CD4-positive, alpha-beta T cell (primary cell): ENCODE measurements at regions of chr14 and their contacts with region 1.

Region 1: DNA sequence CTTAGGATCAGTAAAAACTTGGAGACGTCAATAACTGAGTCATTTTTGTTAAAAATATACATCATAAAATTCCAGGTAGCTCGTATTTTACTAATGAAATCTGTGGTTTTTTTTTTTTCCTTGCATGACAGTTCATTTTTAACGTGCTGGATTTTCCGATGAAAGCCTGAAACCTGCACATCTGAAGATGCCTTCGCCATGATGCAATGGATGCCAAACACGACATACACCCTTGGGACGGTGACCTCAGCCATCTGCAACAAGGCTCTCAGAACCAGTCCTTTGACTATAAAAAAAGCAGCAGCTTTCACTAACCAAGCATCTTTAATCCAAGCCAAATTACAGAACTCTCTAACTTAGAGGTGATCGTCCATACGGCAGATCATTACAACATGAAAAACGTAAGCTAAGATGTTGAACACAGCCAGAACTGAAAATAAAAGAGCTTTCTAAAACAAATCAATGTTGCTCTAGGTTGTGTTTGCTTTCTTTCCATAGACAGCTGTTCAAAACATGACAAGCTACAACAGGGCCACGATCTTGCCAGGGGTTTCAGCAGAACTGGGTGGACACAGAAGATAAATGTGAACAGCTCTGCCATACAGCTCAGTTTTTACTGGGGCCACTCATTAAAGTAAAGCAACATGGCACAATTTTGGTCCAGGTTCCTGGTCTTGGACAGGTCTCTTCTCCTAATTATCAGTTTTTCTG is 7.8 kb downstream of the NIN start:
- DNase-seq: peak in 1 of 14 experiments; percentile 23
- ATAC-seq: peak; percentile 8
- H3K4me3 ChIP-seq: peak overlapping the region; percentile 11
- H3K4me3 Mint-ChIP-seq: peak overlapping the region; percentile 73
- H3K27ac ChIP-seq: peak overlapping the region; percentile 66 to 78
- H3K27ac Mint-ChIP-seq: peak overlapping the region; percentile 85
- H3K4me1 ChIP-seq: peaks cover 56% of the 10 kb centered on the region
- H3K4me1 Mint-ChIP-seq: peaks cover 95% of the 10 kb centered on the region
- H3K27me3 ChIP-seq: no peaks in the 10 kb centered on the region
- H3K27me3 Mint-ChIP-seq: no peaks in the 10 kb centered on the region
- CTCF ChIP-seq: no peak

Region 2: GRCh38 chr14:50231475-50232275 is 591.5 kb before region 1 on chr14 and contains the start of gene SOS2:
- CTCF ChIA-PET with region 1: no interaction called
- POLR2A ChIA-PET with region 1: no interaction called
- intact Hi-C with region 1: loop called in 1 of 2 experiments (anchors 10 kb)
- DNase-seq: peak; percentile 66 to 91 (median 81)
- ATAC-seq: peak; percentile 80
- H3K4me3 ChIP-seq: peak within 1 kb of the TSS; percentile 85
- H3K4me3 Mint-ChIP-seq: peak within 1 kb of the TSS; percentile 91
- H3K27ac ChIP-seq: peak within 1 kb of the TSS; percentile 83 to 86
- H3K27ac Mint-ChIP-seq: peak within 1 kb of the TSS; percentile 92
- H3K4me1 ChIP-seq: peaks cover 24% of the 10 kb centered on the region
- H3K4me1 Mint-ChIP-seq: peaks cover 57% of the 10 kb centered on the region
- H3K27me3 ChIP-seq: no peaks in the 10 kb centered on the region
- H3K27me3 Mint-ChIP-seq: no peaks in the 10 kb centered on the region
- CTCF ChIP-seq: no peak
- total RNA-seq, gene SOS2: 53.8 to 56.7 TPM

Region 3: GRCh38 chr14:50785457-50786063 is 37.6 kb before region 1 on chr14:
- CTCF ChIA-PET with region 1: interaction called, 3 read pairs
- POLR2A ChIA-PET with region 1: interaction called, 49 read pairs
- intact Hi-C with region 1: loop called in 1 of 2 experiments (anchors 5 kb)
- DNase-seq: peak in 4 of 14 experiments; percentile 22 to 39 (median 30)
- ATAC-seq: peak; percentile 67
- H3K4me3 ChIP-seq: no peak overlapping the region
- H3K4me3 Mint-ChIP-seq: peak overlapping the region; percentile 49
- H3K27ac ChIP-seq: peak overlapping the region; percentile 65 to 74
- H3K27ac Mint-ChIP-seq: peak overlapping the region; percentile 94
- H3K4me1 ChIP-seq: peaks cover 46% of the 10 kb centered on the region
- H3K4me1 Mint-ChIP-seq: peaks cover 87% of the 10 kb centered on the region
- H3K27me3 ChIP-seq: no peaks in the 10 kb centered on the region
- H3K27me3 Mint-ChIP-seq: no peaks in the 10 kb centered on the region
- CTCF ChIP-seq: no peak